ENCODE measurements at regions of chr3 and their contacts with region 1.

Region 1: DNA sequence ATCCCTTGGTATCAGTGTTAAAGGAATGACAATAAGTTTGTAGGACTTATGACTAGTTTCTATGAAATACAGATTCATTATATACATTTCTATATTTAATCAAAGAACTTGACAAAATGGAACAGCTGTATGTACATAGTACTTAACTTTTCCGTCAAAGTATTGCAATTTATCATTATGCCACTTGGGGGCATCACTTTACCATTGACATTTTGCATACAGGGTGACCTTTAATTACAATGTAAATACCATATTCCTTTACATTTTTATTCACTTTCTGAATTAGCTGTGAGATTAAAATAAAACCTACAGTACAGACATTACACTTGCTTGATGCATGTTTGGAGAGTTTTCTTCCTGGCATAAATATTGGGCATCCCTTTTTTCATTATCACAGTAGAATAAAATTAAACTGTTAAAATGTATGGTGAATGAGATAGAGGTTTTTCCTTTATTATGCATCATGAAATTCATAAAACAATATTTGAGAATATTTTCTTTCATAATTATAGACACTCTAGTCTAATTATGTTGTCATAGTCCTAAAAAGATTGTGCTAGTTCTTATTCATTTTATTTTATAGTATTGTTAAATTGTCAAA is 6.9 kb downstream of the NEK11 start:
- DNase-seq: peak in 7 of 9 donors; percentile 18 to 62 (median 55)
- ATAC-seq: peak; percentile 80
- H3K4me3 ChIP-seq: no peak overlapping the region
- H3K4me3 Mint-ChIP-seq: no peak overlapping the region
- H3K27ac ChIP-seq: no peak overlapping the region
- H3K27ac Mint-ChIP-seq: no peak overlapping the region
- H3K4me1 ChIP-seq: no peaks in the 10 kb centered on the region
- H3K4me1 Mint-ChIP-seq: peaks cover 0 to 2% (median 0%) of the 10 kb centered on the region in 7 donors
- H3K27me3 ChIP-seq: no peaks in the 10 kb centered on the region
- H3K27me3 Mint-ChIP-seq: peaks cover 0 to 7% (median 0%) of the 10 kb centered on the region in 5 donors

Region 2: GRCh38 chr3:131009698-131010097 is 23.9 kb before region 1 on chr3:
- CTCF ChIA-PET with region 1: no interaction called
- POLR2A ChIA-PET with region 1: no interaction called
- intact Hi-C with region 1: no loop called
- DNase-seq: no peak
- ATAC-seq: no peak
- H3K4me3 ChIP-seq: no peak overlapping the region
- H3K4me3 Mint-ChIP-seq: no peak overlapping the region
- H3K27ac ChIP-seq: no peak overlapping the region
- H3K27ac Mint-ChIP-seq: no peak overlapping the region
- H3K4me1 ChIP-seq: no peaks in the 10 kb centered on the region
- H3K4me1 Mint-ChIP-seq: peaks cover 0 to 12% (median 2%) of the 10 kb centered on the region in 7 donors
- H3K27me3 ChIP-seq: no peaks in the 10 kb centered on the region
- H3K27me3 Mint-ChIP-seq: no peaks in the 10 kb centered on the region

Region 3: DNA sequence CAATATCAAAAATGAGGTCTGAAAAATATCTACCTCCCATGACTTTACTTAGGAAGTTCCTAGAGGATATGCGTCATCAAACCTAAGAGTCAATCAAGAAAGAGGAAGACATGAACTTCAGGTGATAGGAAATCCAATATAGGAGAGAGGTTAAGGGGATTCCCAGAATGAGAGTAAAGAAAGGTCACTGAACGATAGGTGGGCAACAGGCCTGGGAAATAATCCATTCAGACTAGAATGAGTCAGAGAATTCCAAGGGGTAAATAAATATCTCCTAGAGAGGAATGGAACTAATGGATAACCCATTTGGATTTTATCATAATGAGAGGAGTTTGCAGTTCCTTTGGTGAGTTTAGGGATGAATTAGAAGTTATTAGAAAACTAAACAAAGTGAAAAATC is 216.9 kb after region 1 on chr3:
- CTCF ChIA-PET with region 1: no interaction called
- POLR2A ChIA-PET with region 1: interaction called, 11 read pairs
- intact Hi-C with region 1: no loop called
- DNase-seq: no peak
- ATAC-seq: no peak
- H3K4me3 ChIP-seq: no peak overlapping the region
- H3K4me3 Mint-ChIP-seq: no peak overlapping the region
- H3K27ac ChIP-seq: no peak overlapping the region
- H3K27ac Mint-ChIP-seq: no peak overlapping the region
- H3K4me1 ChIP-seq: no peaks in the 10 kb centered on the region
- H3K4me1 Mint-ChIP-seq: no peaks in the 10 kb centered on the region
- H3K27me3 ChIP-seq: no peaks in the 10 kb centered on the region
- H3K27me3 Mint-ChIP-seq: peaks cover 0 to 16% (median 4%) of the 10 kb centered on the region in 5 donors

Region 4: DNA sequence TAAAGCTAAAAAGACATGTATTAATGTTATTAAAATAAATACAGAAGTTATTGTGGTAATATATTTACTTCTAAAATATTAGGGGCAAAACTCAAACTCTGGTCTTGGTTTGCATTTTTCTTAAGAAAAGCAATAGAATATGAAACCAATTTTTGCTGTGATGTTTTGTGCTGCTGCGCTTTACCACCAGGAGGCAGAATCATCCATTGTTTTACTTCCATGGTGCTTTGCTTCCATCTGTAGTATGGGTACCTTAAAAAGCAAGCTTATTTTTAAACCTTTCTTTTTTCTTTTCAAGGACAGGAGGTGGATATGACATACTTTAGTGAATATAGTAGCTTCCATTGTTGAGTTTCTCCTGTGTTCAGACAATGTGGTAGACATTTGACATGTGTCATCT is 515.8 kb after region 1 on chr3:
- CTCF ChIA-PET with region 1: no interaction called
- POLR2A ChIA-PET with region 1: no interaction called
- intact Hi-C with region 1: loop called in 1 of 2 experiments (anchors 5 kb)
- DNase-seq: no peak
- ATAC-seq: no peak
- H3K4me3 ChIP-seq: no peak overlapping the region
- H3K4me3 Mint-ChIP-seq: no peak overlapping the region
- H3K27ac ChIP-seq: no peak overlapping the region
- H3K27ac Mint-ChIP-seq: no peak overlapping the region
- H3K4me1 ChIP-seq: no peaks in the 10 kb centered on the region
- H3K4me1 Mint-ChIP-seq: peaks cover 0 to 15% (median 0%) of the 10 kb centered on the region in 7 donors
- H3K27me3 ChIP-seq: no peaks in the 10 kb centered on the region
- H3K27me3 Mint-ChIP-seq: peaks cover 14 to 45% (median 29%) of the 10 kb centered on the region in 5 donors

Region 5: GRCh38 chr3:131794766-131795388 is 761.3 kb after region 1 on chr3:
- CTCF ChIA-PET with region 1: no interaction called
- POLR2A ChIA-PET with region 1: no interaction called
- intact Hi-C with region 1: loop called (anchors 1 kb)
- DNase-seq: peak in 5 of 9 donors; percentile 21 to 43 (median 34)
- ATAC-seq: peak; percentile 77
- H3K4me3 ChIP-seq: no peak overlapping the region
- H3K4me3 Mint-ChIP-seq: no peak overlapping the region
- H3K27ac ChIP-seq: no peak overlapping the region
- H3K27ac Mint-ChIP-seq: peak overlapping the region in 1 of 9 donors; percentile 29
- H3K4me1 ChIP-seq: no peaks in the 10 kb centered on the region
- H3K4me1 Mint-ChIP-seq: peaks cover 0 to 15% (median 9%) of the 10 kb centered on the region in 7 donors
- H3K27me3 ChIP-seq: no peaks in the 10 kb centered on the region
- H3K27me3 Mint-ChIP-seq: peaks cover 4 to 36% (median 16%) of the 10 kb centered on the region in 5 donors

Region 6: DNA sequence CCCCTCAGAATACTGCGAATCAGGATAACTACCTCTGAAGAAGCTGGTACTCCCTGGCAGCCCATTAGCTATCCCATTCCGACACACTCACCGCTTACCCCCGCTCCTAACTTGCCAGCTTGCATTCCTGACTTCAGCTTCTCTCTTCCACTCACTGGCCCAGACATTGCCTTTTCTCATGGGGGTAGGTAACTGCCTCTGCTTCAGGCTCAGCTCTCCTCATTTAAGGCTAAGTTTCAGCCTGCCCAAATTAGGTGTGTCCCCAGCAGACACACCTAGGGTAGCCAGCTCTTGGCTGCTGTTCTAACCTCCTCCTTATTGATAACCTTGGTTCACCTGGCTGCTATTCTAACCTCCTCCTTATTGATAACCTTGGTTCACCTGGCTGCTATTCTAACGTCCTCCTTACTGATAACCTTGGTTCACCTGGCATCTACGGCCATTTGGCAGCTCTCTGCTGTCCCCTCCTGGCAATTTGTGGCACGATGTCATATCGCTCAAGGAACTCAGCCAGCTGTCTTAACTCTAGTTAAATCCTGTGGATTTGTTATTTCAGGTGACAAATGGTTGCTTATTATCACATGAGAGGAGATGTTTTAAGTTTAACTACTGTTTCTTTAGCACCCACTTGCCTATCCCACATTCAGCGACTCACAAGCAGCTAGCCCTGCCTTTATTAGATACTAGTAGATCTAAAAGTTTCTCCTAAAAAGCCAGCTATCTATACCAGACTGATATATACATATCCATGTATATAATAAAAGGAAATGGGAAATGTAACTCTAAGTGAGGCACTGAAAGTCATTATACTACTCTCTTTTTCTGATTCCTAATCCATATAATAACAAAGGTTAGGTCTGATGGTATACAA is 1177.1 kb after region 1 on chr3:
- CTCF ChIA-PET with region 1: no interaction called
- POLR2A ChIA-PET with region 1: no interaction called
- intact Hi-C with region 1: loop called in 1 of 2 experiments (anchors 1 kb)
- DNase-seq: no peak
- ATAC-seq: no peak
- H3K4me3 ChIP-seq: no peak overlapping the region
- H3K4me3 Mint-ChIP-seq: no peak overlapping the region
- H3K27ac ChIP-seq: no peak overlapping the region
- H3K27ac Mint-ChIP-seq: no peak overlapping the region
- H3K4me1 ChIP-seq: no peaks in the 10 kb centered on the region
- H3K4me1 Mint-ChIP-seq: no peaks in the 10 kb centered on the region
- H3K27me3 ChIP-seq: no peaks in the 10 kb centered on the region
- H3K27me3 Mint-ChIP-seq: peaks cover 5 to 37% (median 26%) of the 10 kb centered on the region in 5 donors

Measured in naive thymus-derived CD4-positive, alpha-beta T cell (primary cell).